Activated CD4-positive, alpha-beta T cell treated with anti-CD3 and anti-CD28 coated beads, Interleukin-2, amount 10 ng/mL, durations not matched to agents 24 days and 14 days (primary cell): ENCODE measurements at regions of chr12 and their contacts with region 1.

Region 1: DNA sequence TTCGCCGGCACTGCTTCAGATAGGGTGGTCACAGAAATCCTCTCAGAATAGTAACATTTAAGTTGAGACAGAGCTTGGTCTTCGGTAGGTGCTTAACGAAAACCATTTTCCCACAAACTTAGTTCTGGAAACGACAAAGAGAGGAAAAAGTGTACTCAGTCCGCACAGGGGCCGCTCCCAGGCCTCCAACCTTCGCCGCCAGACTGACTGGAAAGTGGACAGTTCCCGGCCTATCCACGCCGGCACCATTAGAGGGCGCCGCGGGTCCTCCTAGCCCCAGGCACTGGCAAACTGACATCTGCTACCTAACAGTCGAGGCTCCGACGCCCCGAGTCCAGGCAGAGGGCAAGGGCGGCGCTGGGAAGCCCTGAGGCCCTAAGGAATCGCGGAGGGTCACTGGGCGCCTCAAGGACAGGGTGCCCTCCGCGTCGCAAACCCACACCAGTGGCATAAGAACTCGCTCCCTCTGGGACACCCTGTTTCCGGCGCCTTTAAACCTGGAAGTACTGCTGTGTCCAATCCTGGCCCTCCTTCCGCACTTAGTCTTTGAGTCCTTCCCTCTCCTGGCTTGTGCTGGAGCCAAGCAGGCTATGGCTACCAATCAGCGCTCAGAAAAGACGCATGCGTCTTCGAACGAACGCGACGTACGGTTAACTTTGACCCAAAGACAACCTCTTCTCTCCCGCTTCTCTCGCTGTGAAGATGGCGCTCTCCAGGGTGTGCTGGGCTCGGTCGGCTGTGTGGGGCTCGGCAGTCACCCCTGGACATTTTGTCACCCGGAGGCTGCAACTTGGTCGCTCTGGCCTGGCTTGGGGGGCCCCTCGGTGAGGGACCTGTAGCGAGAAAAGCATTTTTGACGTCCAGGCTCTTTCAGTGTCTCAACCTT is at the start of gene LETMD1:
- DNase-seq: peak; percentile 97
- H3K4me3 Mint-ChIP-seq: peak within 1 kb of the TSS; percentile 93
- H3K27ac Mint-ChIP-seq: peak within 1 kb of the TSS; percentile 90
- H3K4me1 Mint-ChIP-seq: peaks cover 29% of the 10 kb centered on the region
- H3K27me3 Mint-ChIP-seq: no peaks in the 10 kb centered on the region
- total RNA-seq, gene LETMD1: 75.7 and 77.8 TPM in 2 replicates

Region 2: GRCh38 chr12:50763639-50764285 is 284.1 kb before region 1 on chr12 and contains the start of gene ATF1:
- intact Hi-C with region 1: loop called (anchors 1 kb)
- DNase-seq: peak; percentile 98
- H3K4me3 Mint-ChIP-seq: peak within 1 kb of the TSS; percentile 94
- H3K27ac Mint-ChIP-seq: peak within 1 kb of the TSS; percentile 99
- H3K4me1 Mint-ChIP-seq: peaks cover 31% of the 10 kb centered on the region
- H3K27me3 Mint-ChIP-seq: no peaks in the 10 kb centered on the region
- total RNA-seq, gene ATF1: 66.0 and 67.6 TPM in 2 replicates

Region 3: DNA sequence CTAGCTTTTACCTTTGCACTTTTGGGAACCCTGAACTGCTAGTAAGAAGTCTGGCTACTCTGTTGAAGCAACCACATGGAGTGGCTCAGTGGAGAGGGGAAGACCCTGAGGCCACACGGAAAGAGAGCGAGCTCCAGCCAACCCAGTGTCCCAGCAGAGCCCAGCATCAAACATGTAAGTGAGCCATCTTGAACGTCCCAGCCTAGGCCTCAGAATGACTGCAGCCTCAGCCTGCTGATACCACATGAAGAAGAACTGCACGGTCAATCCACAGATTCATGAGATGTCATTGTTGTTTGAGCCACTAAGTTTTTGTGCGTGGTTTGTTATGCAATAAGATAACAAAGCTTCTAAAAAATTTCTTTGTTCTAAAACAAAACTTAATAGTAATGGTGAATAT is 84.8 kb after region 1 on chr12:
- intact Hi-C with region 1: no loop called
- DNase-seq: no peak
- H3K4me3 Mint-ChIP-seq: no peak overlapping the region
- H3K27ac Mint-ChIP-seq: no peak overlapping the region
- H3K4me1 Mint-ChIP-seq: peaks cover 1% of the 10 kb centered on the region
- H3K27me3 Mint-ChIP-seq: no peaks in the 10 kb centered on the region

Region 4: DNA sequence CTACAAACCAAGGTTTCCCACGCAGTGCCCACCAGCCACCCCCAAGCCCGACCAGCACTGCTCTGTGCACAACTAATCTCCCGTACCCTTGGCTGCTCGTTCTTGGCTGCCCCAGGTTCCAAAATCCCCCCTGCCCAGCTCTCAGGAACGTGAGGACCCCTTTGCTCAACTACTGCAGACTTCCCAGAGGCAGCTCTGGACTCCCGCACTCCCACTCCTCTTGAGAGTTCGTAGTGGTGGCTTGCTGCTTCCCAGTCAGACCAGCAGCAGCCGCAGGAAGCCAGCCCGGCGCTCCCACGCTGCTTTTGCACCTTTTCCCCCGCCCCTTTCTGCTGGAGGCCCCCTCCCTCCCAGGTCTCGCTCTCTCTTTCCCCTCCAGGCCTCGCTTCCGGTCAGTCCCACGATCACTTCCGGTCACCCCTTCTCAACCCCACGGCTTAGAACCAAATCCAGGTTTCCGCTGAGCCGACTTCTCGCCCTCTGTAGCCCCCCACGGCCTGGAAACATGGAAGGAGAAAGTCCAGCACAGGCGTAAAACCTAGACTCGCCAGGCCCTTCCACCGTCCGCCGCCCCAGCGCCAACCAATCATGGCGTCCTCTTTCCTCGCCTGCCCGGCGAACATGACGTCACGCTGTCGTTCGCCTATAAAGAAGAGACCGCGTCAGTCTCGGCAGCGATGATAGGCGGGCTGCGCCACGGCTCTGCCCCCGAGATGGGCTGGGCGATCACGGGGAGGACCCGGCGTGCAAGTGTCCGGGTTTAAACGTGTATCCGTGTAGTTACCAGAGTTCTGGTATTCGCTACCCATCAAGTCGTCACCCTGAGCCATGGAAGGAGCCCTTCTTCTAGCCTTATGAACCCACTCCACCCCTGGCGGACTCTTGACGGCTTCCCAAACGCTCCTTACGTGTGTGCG is 124.9 kb after region 1 on chr12 and contains the start of gene TFCP2:
- intact Hi-C with region 1: loop called (anchors 1 kb)
- DNase-seq: peak; percentile 98
- H3K4me3 Mint-ChIP-seq: peak within 1 kb of the TSS; percentile 80
- H3K27ac Mint-ChIP-seq: peak within 1 kb of the TSS; percentile 86
- H3K4me1 Mint-ChIP-seq: peaks cover 12% of the 10 kb centered on the region
- H3K27me3 Mint-ChIP-seq: no peaks in the 10 kb centered on the region
- total RNA-seq, gene TFCP2: 43.1 and 46.3 TPM in 2 replicates

Region 5: DNA sequence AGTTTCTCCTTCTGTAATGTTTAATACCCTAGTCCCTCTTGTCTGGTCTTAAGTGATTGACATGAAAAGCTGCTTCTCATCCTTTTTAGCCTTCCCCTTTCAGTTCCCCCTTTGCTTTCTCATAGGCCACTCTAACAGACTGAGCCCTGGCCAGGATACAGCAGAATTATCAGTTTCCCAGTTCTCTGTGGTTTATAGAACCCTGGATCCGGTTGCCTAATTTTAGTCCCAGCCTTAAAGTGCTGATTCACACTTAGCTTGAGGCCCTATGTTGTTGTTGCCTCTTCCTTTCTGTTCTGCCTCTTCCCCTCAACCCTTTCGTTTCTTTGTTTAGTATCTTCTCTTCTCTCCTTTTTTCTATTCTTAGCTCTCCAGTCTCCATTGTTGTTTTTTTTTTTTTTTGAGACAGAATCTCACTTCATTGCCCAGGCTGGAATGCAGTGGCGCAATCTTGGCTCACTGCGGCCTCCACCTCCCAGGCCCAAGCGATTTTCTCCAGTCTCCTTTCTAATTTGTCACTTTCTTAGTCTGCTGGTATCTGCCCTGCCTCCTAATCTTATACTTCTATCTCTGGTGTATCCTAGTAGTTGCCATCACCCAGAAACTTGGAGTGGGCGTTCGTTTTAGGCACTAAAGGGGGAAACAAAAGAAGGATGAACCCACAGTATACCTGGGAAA is 279.0 kb after region 1 on chr12:
- intact Hi-C with region 1: loop called (anchors 5 kb)
- DNase-seq: peak; percentile 74
- H3K4me3 Mint-ChIP-seq: peak overlapping the region; percentile 74
- H3K27ac Mint-ChIP-seq: peak overlapping the region; percentile 89
- H3K4me1 Mint-ChIP-seq: peaks cover 62% of the 10 kb centered on the region
- H3K27me3 Mint-ChIP-seq: no peaks in the 10 kb centered on the region